Aorta (tissue), 5 donors: ENCODE measurements at regions of chr11 and their contacts with region 1.

Region 1: DNA sequence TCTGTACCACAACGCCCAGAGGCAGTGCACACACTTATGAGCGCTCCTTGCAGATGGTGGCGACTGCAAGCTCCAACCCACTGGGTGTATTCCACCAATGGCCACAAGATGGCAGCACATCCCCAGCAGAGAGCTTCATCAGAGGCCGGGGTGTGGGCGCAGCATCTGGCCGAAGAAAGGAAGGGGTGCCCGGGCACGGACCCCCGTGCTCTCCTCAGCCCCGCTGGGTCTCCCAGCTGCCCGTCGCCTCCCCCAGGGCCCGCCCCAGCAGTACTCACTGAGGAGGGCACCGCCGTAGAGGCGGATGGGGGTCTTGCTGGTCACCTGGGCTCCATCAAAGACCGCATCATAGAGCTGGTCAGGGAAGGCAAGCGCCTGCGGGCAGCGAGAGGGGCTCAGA is 14.2 kb downstream of the TP53I11 start:
- DNase-seq: peak; percentile 87 to 91
- ATAC-seq: peak; percentile 86
- H3K4me3 ChIP-seq: no peak overlapping the region
- H3K27ac ChIP-seq: no peak overlapping the region
- H3K4me1 ChIP-seq: no peaks in the 10 kb centered on the region
- H3K27me3 ChIP-seq: no peaks in the 10 kb centered on the region

Region 2: GRCh38 chr11:45102810-45103621 is 166.5 kb after region 1 on chr11:
- intact Hi-C with region 1: loop called (anchors 1 to 2 kb)
- DNase-seq: peak; percentile 71 to 84
- ATAC-seq: peak; percentile 80
- H3K4me3 ChIP-seq: no peak overlapping the region
- H3K27ac ChIP-seq: no peak overlapping the region
- H3K4me1 ChIP-seq: peaks cover 0 to 2% of the 10 kb centered on the region in 2 donors
- H3K27me3 ChIP-seq: no peaks in the 10 kb centered on the region

Region 3: DNA sequence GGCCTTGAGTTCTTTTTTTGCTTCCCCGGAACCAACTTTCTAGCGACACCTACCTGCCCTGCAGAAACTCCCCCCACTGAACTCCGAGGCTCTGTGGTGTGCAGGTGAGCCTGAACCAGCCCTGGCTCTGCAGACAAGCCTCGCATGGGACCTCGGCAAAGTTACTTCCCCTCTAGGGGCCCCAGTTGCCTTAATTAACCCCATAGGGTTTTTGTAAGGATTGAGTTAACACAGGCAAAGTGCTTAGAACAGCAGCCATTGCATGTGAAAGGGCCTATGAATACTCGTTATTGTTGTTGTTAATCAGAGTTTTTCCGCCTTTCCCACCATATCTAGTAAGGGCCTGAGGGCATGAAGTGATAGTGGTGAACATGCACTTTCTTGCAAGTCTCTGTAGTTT is 362.2 kb after region 1 on chr11:
- intact Hi-C with region 1: loop called (anchors 10 kb)
- DNase-seq: no peak
- ATAC-seq: no peak
- H3K4me3 ChIP-seq: no peak overlapping the region
- H3K27ac ChIP-seq: no peak overlapping the region
- H3K4me1 ChIP-seq: no peaks in the 10 kb centered on the region
- H3K27me3 ChIP-seq: no peaks in the 10 kb centered on the region

Region 4: GRCh38 chr11:45339729-45340519 is 403.4 kb after region 1 on chr11:
- intact Hi-C with region 1: loop called in 1 of 2 experiments (anchors 10 kb)
- DNase-seq: peak; percentile 97 to 99
- ATAC-seq: peak; percentile 94
- H3K4me3 ChIP-seq: no peak overlapping the region
- H3K27ac ChIP-seq: no peak overlapping the region
- H3K4me1 ChIP-seq: no peaks in the 10 kb centered on the region
- H3K27me3 ChIP-seq: no peaks in the 10 kb centered on the region